Body of pancreas (tissue), 4 donors: ENCODE measurements at regions of chr2 and their contacts with region 1.

Region 1: DNA sequence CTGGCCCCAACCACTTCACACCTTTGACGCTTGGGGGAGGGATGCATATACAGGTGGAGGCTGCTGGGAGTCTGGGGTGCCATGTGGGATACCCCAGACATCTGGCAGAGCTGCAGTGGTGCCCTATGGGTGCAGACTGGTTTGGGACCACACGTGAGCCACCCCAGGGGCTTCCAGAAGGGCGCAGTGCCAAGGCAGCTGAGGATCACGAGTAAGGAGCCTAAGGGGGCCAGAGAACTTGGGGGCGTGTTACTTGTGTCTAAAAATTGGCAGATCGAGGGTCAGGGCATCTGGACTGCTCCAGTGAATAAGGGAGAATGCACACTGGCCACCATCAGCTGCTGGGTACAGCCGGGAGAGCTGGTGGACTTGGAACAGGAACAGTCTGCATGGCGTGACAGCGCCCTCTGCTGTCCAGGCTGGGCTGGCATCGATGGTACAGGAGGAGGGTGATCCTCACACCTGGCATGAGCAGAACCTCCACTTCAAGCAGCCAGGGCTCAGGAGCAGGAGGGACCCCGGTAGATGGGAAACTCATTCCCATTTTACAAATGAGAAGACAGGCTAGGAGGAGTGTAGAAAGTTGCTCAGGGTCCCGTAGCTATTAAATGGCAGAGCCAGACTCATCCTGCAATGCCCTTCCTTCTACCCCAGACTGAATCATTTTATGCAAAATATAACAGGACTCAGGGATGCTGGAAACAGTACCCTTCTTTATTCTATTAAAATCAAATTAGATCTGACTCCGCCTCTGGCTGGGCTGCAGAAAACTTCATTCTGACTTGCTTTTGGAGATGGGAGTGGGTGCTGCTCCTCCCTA is 60.4 kb downstream of the ATOH8 start:
- DNase-seq: peak; percentile 93 to 95 (median 94)
- ATAC-seq: peak; percentile 95
- H3K4me3 ChIP-seq: no peak overlapping the region
- H3K27ac ChIP-seq: peak overlapping the region in 3 of 4 donors; percentile 6 to 21 (median 15)
- H3K4me1 ChIP-seq: peaks cover 10% of the 10 kb centered on the region
- H3K27me3 ChIP-seq: no peaks in the 10 kb centered on the region
- CTCF ChIP-seq: peak; percentile 93 to 98 (median 97)
- POLR2A ChIP-seq: no peak

Region 2: DNA sequence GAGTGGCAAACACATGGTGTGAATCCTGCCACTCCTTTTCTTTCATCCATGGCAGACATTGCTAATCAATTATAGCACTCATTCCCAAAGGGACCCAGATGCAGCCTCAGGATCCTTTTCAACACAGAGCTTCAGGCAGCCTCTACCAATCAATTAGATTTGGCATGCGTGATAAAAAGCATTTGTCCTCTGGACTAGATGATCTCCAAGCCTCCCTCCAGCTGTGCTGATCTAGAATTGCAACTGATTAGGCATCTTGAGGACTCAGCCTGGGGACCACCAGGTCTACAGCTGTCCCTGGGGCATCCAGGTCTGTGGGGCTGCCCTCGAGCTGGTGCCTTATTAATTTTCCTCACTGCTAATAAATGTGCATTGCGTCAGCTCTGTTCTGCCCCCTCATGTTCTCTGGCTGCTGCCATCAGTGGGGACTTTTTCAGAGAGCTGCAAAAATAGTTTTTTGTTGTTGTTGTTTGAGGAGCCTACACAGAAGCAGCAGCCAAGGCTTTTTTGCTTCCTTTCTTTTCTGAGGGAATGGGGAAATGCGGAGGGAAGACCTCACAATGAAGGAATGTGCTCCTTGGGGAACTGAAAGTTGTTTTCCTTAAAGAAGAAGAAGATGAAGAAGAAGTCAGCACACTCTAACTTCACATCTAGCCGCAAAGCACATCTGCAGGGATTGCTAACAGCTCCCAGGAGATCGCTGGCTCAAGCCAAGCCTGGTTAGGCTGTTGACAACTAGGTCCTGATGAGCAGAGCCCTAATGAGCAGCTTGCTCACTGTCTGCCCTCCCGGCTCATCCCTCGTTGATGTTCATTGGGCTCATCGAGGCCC is 69.2 kb before region 1 on chr2:
- intact Hi-C with region 1: loop called (anchors 5 kb)
- DNase-seq: peak in 1 of 4 donors; percentile 58
- ATAC-seq: peak; percentile 2
- H3K4me3 ChIP-seq: no peak overlapping the region
- H3K27ac ChIP-seq: peak overlapping the region in 3 of 4 donors; percentile 28 to 57 (median 37)
- H3K4me1 ChIP-seq: peaks cover 41% of the 10 kb centered on the region
- H3K27me3 ChIP-seq: no peaks in the 10 kb centered on the region
- CTCF ChIP-seq: no peak
- POLR2A ChIP-seq: no peak